T-cell (primary cell): ENCODE measurements at regions of chr12 and their contacts with region 1.

Region 1: GRCh38 chr12:12736759-12737676 is 19.9 kb downstream of the CDKN1B start:
- DNase-seq: peak in 31 of 35 experiments; percentile 16 to 77 (median 44)
- ATAC-seq: peak; percentile 82 to 88 (median 84)
- H3K4me3 ChIP-seq: peak overlapping the region in 1 of 2 donors; percentile 46
- H3K4me3 Mint-ChIP-seq: peak overlapping the region; percentile 59 to 76 (median 68)
- H3K27ac ChIP-seq: peak overlapping the region; percentile 87
- H3K27ac Mint-ChIP-seq: peak overlapping the region; percentile 89 to 95
- H3K4me1 ChIP-seq: peaks cover 5 to 34% of the 10 kb centered on the region in 2 experiments
- H3K4me1 Mint-ChIP-seq: peaks cover 35 to 56% (median 39%) of the 10 kb centered on the region in 3 donors
- H3K27me3 ChIP-seq: no peaks in the 10 kb centered on the region
- H3K27me3 Mint-ChIP-seq: no peaks in the 10 kb centered on the region

Region 2: DNA sequence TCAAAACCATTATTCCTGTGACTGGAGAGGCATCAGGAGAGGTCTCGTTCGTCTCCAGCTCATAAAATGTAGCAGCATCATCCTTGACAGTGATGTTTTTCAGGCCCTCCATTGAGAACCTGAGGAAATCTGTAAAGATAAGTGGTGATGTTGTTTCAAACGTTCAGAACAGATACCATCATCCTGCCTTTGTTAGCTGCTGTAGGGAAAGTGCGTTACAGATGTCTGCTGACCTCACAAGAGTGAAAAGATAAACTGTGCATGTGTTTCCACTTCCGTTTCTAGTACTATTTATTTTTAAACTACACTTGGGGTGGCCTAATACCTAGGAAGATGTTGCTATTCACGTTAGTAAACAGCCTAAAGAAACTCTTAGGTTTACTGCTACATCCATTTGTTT is 637.9 kb before region 1 on chr12:
- CTCF ChIA-PET with region 1: interaction called in 1 of 2 experiments, 10 read pairs
- POLR2A ChIA-PET with region 1: no interaction called
- DNase-seq: no peak
- ATAC-seq: no peak
- H3K4me3 ChIP-seq: no peak overlapping the region
- H3K4me3 Mint-ChIP-seq: no peak overlapping the region
- H3K27ac ChIP-seq: no peak overlapping the region
- H3K27ac Mint-ChIP-seq: no peak overlapping the region
- H3K4me1 ChIP-seq: no peaks in the 10 kb centered on the region
- H3K4me1 Mint-ChIP-seq: no peaks in the 10 kb centered on the region
- H3K27me3 ChIP-seq: peaks cover 0 to 2% of the 10 kb centered on the region in 2 experiments
- H3K27me3 Mint-ChIP-seq: peaks cover 0 to 5% of the 10 kb centered on the region in 2 donors

Region 3: DNA sequence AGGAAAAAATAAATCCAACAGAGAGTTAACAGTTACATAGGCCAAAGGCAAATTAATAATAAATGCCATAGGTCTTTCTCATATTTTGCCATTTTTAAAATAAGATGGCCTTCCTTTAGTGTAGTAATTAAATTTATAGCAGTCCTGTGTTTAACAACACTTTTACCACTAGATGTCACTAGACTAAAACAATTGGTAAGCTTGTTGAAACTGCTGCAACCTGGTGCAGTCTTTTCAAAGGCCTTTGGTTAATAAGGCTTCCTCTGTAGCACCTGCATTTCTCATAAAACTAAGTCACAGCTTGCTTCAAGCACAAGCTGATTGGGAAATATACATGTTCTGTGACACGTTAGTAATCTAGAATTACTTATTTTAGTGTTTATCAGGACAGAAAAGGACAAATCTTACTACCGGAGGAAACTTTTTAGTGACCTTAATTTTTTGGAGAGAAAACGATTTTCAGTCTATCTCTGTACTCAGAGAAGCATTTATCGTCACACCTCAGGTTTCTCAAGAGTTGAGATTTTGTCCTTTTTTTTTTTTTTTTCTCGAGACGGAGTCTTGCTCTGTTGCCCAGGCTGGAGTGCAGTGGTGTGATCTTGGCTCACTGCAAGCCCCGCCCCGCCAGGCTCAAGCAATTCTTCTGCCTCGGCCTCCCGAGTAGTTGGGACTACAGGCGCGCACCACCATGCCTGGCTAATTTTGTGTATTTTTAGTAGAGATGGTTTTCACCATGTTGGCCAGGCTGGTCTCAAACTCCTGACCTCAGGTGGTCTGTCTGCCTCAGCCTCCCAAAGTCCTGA is 360.2 kb before region 1 on chr12:
- CTCF ChIA-PET with region 1: interaction called, 12 to 37 read pairs
- POLR2A ChIA-PET with region 1: interaction called in 1 of 2 experiments, 6 read pairs
- DNase-seq: peak in 16 of 35 experiments; percentile 14 to 82 (median 26)
- ATAC-seq: peak; percentile 48 to 84 (median 72)
- H3K4me3 ChIP-seq: no peak overlapping the region
- H3K4me3 Mint-ChIP-seq: no peak overlapping the region
- H3K27ac ChIP-seq: no peak overlapping the region
- H3K27ac Mint-ChIP-seq: peak overlapping the region; percentile 61 to 74
- H3K4me1 ChIP-seq: peaks cover 8 to 34% of the 10 kb centered on the region in 2 experiments
- H3K4me1 Mint-ChIP-seq: peaks cover 38 to 52% (median 49%) of the 10 kb centered on the region in 3 donors
- H3K27me3 ChIP-seq: no peaks in the 10 kb centered on the region
- H3K27me3 Mint-ChIP-seq: no peaks in the 10 kb centered on the region

Region 4: DNA sequence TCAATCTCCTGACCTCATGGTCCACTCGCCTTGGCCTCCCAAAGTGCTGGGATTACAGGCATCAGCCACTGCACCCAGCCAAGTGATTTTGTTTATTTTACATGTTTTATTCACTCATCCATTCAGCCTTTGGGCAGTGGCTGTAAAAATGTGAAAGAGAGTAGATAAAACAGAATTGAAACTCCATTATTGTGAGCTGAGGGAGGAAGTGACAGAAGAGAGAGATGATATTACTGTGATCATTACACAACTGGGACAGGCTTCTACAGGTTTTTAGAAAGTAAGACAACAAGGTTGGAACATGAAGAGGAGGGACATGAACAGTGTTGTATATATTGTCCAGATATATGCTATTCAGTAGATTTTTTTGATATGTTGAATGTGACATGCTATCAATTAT is 100.4 kb before region 1 on chr12:
- CTCF ChIA-PET with region 1: interaction called in 1 of 2 experiments, 21 read pairs
- POLR2A ChIA-PET with region 1: no interaction called
- DNase-seq: no peak
- ATAC-seq: no peak
- H3K4me3 ChIP-seq: no peak overlapping the region
- H3K4me3 Mint-ChIP-seq: no peak overlapping the region
- H3K27ac ChIP-seq: no peak overlapping the region
- H3K27ac Mint-ChIP-seq: peak overlapping the region; percentile 9 to 39
- H3K4me1 ChIP-seq: no peaks in the 10 kb centered on the region
- H3K4me1 Mint-ChIP-seq: peaks cover 12 to 17% (median 12%) of the 10 kb centered on the region in 3 donors
- H3K27me3 ChIP-seq: no peaks in the 10 kb centered on the region
- H3K27me3 Mint-ChIP-seq: no peaks in the 10 kb centered on the region

Region 5: DNA sequence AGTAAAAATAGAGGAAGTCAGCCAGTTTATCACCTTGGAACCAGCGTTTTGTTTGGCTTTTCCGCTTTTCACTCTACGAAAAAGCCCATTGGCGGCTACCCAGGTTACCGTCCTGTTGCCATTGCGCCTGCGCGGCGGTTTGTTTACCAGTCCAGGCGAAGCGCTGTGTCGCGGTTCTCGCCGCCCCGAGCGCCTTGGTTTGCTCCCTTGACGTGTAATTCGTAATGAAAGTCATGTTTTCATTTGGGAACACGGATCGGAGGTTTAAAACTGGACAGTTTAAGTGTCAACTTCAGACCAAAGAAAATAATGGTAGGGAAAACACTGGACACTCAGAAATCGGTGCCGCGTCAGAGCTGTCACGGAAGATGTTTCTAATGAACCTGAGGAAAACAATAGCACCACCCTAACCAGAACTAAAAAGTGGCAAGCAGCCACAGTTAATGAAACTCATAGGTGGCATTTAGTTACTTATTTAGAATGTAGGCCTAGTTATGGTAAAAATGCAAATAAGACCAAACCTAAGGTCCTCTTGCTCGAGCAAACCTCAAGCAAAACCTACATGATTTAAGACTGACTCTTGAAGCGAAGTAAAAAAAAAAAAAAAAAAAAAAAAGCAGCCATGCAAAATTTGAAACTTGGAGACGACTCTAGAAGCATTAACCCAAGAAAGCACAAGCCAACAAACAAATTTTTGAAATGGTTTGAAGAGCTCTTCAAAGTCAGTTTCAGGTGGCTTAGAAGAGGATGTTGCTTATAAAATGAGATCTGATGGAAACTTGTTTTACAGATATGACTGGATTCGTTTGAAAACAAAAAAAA is 40.2 kb before region 1 on chr12:
- CTCF ChIA-PET with region 1: interaction called, 5 to 27 read pairs
- POLR2A ChIA-PET with region 1: interaction called, 4 to 9 read pairs
- DNase-seq: peak; percentile 88 to 95 (median 92)
- ATAC-seq: peak; percentile 88 to 92 (median 90)
- H3K4me3 ChIP-seq: peak overlapping the region; percentile 57 to 66
- H3K4me3 Mint-ChIP-seq: peak overlapping the region; percentile 87 to 93 (median 93)
- H3K27ac ChIP-seq: peak overlapping the region; percentile 98
- H3K27ac Mint-ChIP-seq: peak overlapping the region; percentile 99 to 100
- H3K4me1 ChIP-seq: peaks cover 9 to 10% of the 10 kb centered on the region in 2 experiments
- H3K4me1 Mint-ChIP-seq: peaks cover 31 to 37% (median 32%) of the 10 kb centered on the region in 3 donors
- H3K27me3 ChIP-seq: no peaks in the 10 kb centered on the region
- H3K27me3 Mint-ChIP-seq: no peaks in the 10 kb centered on the region

Region 6: GRCh38 chr12:12716793-12717585 is 20.0 kb before region 1 on chr12 and contains the start of gene CDKN1B:
- CTCF ChIA-PET with region 1: interaction called, 10 to 89 read pairs
- POLR2A ChIA-PET with region 1: interaction called, 4 to 31 read pairs
- DNase-seq: peak; percentile 78 to 93 (median 87)
- ATAC-seq: peak; percentile 72 to 77 (median 73)
- H3K4me3 ChIP-seq: peak within 1 kb of the TSS; percentile 94 to 100
- H3K4me3 Mint-ChIP-seq: peak within 1 kb of the TSS; percentile 93 to 99 (median 99)
- H3K27ac ChIP-seq: peak within 1 kb of the TSS; percentile 97
- H3K27ac Mint-ChIP-seq: peak within 1 kb of the TSS; percentile 99 to 100
- H3K4me1 ChIP-seq: peaks cover 38 to 39% of the 10 kb centered on the region in 2 experiments
- H3K4me1 Mint-ChIP-seq: peaks cover 43 to 69% (median 58%) of the 10 kb centered on the region in 3 donors
- H3K27me3 ChIP-seq: no peaks in the 10 kb centered on the region
- H3K27me3 Mint-ChIP-seq: no peaks in the 10 kb centered on the region
- total RNA-seq, gene CDKN1B: 170 to 246 (median 188) TPM

Region 7: GRCh38 chr12:12786716-12787601 is 49.9 kb after region 1 on chr12:
- CTCF ChIA-PET with region 1: interaction called in 1 of 2 experiments, 11 read pairs
- POLR2A ChIA-PET with region 1: interaction called in 1 of 2 experiments, 4 read pairs
- DNase-seq: peak; percentile 31 to 86 (median 62)
- ATAC-seq: peak; percentile 91 to 95 (median 92)
- H3K4me3 ChIP-seq: peak overlapping the region; percentile 65 to 76
- H3K4me3 Mint-ChIP-seq: peak overlapping the region; percentile 80 to 84 (median 83)
- H3K27ac ChIP-seq: peak overlapping the region; percentile 79
- H3K27ac Mint-ChIP-seq: peak overlapping the region; percentile 86 to 88
- H3K4me1 ChIP-seq: peaks cover 9 to 20% of the 10 kb centered on the region in 2 experiments
- H3K4me1 Mint-ChIP-seq: peaks cover 17 to 27% (median 26%) of the 10 kb centered on the region in 3 donors
- H3K27me3 ChIP-seq: no peaks in the 10 kb centered on the region
- H3K27me3 Mint-ChIP-seq: no peaks in the 10 kb centered on the region